Activated CD4-positive, alpha-beta memory T cell treated with anti-CD3 and anti-CD28 coated beads for 36 hours (primary cell): ENCODE measurements at regions of chr1 and their contacts with region 1.

Region 1: DNA sequence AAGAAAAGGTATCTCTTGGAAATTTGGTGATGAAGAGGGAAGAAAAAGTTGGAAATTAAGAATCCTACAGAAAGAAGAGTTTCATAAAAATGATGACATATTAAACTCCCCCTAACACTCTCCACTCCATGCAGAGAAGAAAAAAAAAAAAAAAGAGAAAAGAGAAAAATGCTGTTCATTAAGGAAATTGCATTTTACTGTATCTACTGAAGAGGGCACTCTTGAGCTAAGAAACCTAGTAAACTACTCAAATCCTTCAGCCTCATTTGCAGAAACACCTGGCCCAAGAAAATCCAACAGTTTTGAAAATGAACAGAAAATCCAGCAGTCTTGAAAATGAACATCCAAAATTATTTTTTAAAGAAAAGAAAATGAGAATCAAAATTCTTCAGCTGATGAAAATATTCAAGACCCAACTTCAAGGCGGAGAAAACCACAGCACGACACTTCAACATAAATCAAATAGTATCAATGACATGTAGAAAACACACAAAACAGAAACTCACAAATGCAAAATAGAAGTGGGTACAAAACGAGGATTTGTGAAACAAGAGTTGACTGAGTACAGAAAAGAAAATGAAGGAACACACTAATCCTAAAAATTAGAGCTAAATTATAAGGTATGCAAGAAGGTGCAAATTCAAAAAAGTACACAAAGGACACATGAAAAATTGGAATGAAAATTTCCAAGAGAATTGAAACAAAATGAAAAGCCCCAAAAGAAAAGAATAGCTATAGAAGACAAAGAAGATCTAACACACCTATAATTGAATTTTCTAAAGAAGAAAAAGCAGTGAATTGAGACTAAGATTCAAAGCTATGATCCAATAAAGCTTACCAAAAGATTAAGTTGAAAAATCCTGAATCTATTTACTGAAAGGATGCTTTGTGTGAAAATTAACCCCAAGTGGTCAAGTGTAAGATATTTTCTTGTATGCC is 73.2 kb upstream of the DNAJC6 start:
- DNase-seq: no peak
- H3K4me3 Mint-ChIP-seq: no peak overlapping the region
- H3K27ac Mint-ChIP-seq: no peak overlapping the region
- H3K4me1 Mint-ChIP-seq: peaks cover 9% of the 10 kb centered on the region
- H3K27me3 Mint-ChIP-seq: peaks cover 5% of the 10 kb centered on the region

Region 2: DNA sequence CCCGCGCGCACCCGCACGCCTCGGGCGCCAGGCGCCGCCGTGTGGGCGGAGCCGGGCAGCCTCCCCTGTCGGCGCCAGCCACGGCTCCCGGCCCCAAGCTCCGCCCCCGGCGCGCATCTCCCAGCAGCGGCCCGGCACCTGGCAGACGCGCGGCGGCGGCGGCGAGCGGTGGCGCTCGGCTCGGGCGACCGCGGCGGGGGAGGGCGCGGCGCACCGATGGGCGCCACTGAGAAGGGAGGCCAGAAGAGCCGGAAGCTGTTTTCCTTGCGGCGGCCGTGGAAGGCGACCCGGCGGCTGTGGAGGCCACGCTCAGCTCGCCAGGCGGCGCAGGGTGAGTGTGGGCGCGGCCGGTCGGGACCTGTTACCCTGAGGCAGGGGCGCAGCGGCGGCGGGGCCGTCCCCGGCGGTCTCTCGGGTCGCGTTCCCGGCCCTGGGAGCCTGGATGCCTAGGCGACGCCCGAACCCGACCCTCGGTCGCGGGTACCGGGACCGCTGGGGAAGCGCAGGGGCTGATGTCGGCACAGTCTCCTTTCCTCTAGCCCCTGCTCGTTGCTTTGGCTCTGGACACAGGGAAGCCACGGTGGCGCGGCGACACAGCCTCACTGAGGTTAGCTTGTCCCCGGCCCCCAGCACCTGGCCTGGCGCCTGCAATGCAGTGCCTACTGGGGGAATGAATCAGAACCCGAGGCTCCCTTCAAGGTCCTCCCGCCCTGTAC is 18.3 kb after region 1 on chr1:
- CTCF ChIA-PET with region 1: interaction called, 10 read pairs
- POLR2A ChIA-PET with region 1: interaction called, 3 read pairs
- intact Hi-C with region 1: loop called (anchors 2 kb)
- DNase-seq: peak; percentile 89
- H3K4me3 Mint-ChIP-seq: peak overlapping the region; percentile 84
- H3K27ac Mint-ChIP-seq: no peak overlapping the region
- H3K4me1 Mint-ChIP-seq: peaks cover 16% of the 10 kb centered on the region
- H3K27me3 Mint-ChIP-seq: peaks cover 10% of the 10 kb centered on the region

Region 3: DNA sequence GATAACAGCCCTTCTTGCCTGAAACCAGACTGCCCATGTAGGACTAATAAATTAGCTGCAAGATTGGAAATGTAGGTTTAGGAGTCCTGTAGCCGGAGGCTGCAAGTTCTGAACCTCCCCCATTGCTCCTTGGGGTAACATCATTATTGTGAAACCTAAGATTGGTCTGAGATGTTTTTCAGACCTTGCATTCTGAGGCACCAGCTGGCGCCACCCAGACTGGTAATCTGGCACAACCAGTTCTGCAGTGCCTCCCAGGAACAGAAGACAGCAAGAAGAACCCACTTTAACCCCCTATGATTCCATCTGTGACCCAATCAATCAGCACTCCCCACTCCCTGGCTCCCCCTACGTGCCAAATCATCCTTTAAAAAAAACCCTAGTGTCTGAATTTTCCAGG is 61.5 kb after region 1 on chr1:
- CTCF ChIA-PET with region 1: no interaction called
- POLR2A ChIA-PET with region 1: no interaction called
- intact Hi-C with region 1: no loop called
- DNase-seq: no peak
- H3K4me3 Mint-ChIP-seq: no peak overlapping the region
- H3K27ac Mint-ChIP-seq: no peak overlapping the region
- H3K4me1 Mint-ChIP-seq: no peaks in the 10 kb centered on the region
- H3K27me3 Mint-ChIP-seq: no peaks in the 10 kb centered on the region

Region 4: DNA sequence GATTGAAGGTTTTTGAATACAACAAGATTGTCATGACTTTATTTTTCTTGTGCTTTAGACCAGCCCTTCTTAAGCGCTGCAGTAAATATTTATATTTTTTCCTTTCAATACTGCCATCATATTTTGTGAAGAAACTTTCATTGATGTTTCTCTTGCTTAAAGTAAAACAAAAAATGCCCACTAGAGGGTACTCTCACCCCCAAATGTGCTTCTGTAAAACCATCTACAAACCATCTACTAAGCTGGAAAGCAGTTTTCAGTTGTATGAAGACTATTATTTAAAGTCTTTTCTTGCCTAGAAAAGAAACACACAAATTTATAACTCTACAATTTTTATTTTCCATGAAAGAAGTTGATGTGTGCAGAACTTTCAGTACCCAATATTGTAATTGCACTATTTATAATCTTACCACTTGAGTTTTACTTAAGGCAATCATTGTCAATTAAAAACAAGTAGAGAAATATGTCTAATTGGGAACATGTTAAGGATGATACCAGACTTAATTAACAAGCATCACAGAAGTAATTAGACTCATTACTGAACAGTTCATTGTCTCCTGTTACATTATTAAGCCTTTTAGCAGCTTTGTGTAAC is 195.1 kb after region 1 on chr1:
- CTCF ChIA-PET with region 1: interaction called, 12 read pairs
- POLR2A ChIA-PET with region 1: no interaction called
- intact Hi-C with region 1: no loop called
- DNase-seq: no peak
- H3K4me3 Mint-ChIP-seq: no peak overlapping the region
- H3K27ac Mint-ChIP-seq: no peak overlapping the region
- H3K4me1 Mint-ChIP-seq: peaks cover 5% of the 10 kb centered on the region
- H3K27me3 Mint-ChIP-seq: no peaks in the 10 kb centered on the region

Region 5: GRCh38 chr1:65459397-65459768 is 223.2 kb after region 1 on chr1:
- CTCF ChIA-PET with region 1: interaction called, 35 read pairs
- POLR2A ChIA-PET with region 1: no interaction called
- intact Hi-C with region 1: loop called (anchors 1 kb)
- DNase-seq: no peak
- H3K4me3 Mint-ChIP-seq: no peak overlapping the region
- H3K27ac Mint-ChIP-seq: no peak overlapping the region
- H3K4me1 Mint-ChIP-seq: peaks cover 14% of the 10 kb centered on the region
- H3K27me3 Mint-ChIP-seq: no peaks in the 10 kb centered on the region

Region 6: DNA sequence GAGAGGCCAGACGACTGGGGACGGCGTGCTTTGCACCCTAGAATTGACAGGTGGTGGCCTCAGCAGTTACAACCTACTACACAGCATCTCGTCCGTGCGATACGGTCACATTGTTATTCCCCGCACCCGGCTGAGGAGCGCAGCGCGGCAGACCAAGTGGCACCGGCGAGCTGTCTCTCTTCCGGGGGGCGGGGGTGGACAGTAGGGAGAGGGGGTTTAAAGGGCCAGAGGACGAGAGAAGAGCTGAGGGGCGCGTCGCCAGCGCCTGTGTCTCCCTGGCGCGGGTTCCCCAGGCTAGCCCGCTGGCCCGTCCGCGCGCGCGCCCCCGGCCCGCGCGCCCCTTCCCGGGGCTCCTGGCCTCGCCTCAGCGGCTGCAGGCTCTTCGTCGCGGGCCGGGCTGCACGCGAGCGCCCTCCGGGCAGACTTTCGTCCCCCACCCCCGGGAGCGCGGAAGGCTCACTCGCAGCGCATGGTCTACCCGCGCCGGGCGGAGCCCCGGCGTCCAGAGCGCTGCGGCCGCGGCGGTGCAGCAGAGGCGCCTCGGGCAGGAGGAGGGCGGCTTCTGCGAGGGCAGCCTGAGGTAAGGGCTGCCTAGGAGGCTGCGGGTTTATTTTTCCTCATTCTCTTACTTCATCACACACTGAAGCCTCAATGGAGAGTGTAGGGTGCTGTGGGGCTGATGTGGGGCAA is 556.7 kb after region 1 on chr1 and contains the start of gene PDE4B:
- CTCF ChIA-PET with region 1: no interaction called
- POLR2A ChIA-PET with region 1: no interaction called
- intact Hi-C with region 1: no loop called
- DNase-seq: no peak
- H3K4me3 Mint-ChIP-seq: no peak within 1 kb of the TSS
- H3K27ac Mint-ChIP-seq: no peak within 1 kb of the TSS
- H3K4me1 Mint-ChIP-seq: no peaks in the 10 kb centered on the region
- H3K27me3 Mint-ChIP-seq: peaks cover 39% of the 10 kb centered on the region
- total RNA-seq, gene PDE4B: 34.7 to 38.3 TPM

Region 7: GRCh38 chr1:65958561-65959350 is 722.6 kb after region 1 on chr1:
- CTCF ChIA-PET with region 1: interaction called, 3 read pairs
- POLR2A ChIA-PET with region 1: no interaction called
- intact Hi-C with region 1: loop called (anchors 10 kb)
- DNase-seq: peak; percentile 13
- H3K4me3 Mint-ChIP-seq: no peak overlapping the region
- H3K27ac Mint-ChIP-seq: no peak overlapping the region
- H3K4me1 Mint-ChIP-seq: no peaks in the 10 kb centered on the region
- H3K27me3 Mint-ChIP-seq: peaks cover 2% of the 10 kb centered on the region